Calu3 (cell line): ENCODE measurements at regions of chr22 and their contacts with region 1.

Region 1: DNA sequence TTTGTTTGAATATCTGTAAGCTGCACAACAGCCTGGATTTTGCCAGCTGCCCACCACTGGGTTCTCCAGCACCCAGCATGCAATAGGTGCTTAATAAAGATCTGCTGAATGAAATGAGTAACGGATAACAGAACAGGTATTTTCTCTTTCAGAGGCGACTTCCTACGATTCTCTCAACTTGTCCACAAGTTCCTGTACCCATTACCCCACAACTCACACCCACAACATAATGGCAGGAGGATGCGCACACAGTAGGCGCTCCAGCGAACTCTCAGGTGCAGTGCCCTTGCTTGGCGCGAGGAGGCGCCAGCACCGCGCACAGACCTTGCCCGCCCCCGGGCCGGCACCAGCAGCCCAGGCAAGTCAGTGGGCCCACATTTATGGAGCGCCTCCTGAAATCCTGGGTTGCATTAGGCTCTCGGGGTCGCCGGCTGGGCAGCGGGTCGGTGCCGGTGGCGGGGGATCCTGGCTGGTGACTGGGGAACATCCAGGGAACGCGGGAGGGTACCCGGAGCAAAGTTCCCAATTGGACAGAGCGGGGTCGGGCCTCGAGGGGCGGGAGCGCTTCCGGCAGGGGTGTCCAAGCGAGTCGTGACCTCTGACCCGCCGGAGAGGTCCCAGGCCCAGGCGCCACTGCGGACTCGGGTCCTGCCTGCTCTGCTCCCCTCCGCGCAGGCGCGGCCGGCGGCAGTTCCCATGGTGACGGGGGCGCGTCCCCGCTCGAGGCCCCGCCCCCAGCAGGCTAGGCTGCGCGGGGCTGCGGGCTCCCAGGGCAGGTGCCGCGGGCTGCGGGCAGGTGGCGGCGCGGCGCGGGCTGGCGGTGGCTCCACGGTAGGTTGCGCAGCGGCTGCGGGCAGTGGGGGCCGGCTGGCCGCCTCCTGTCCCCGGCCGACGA is at the start of gene KIAA1671:
- DNase-seq: peak; percentile 96
- H3K4me3 Mint-ChIP-seq: peak within 1 kb of the TSS; percentile 88
- H3K27ac Mint-ChIP-seq: peak within 1 kb of the TSS; percentile 92
- H3K4me1 Mint-ChIP-seq: peaks cover 37% of the 10 kb centered on the region
- H3K27me3 Mint-ChIP-seq: no peaks in the 10 kb centered on the region
- CTCF ChIP-seq: peak; percentile 98
- total RNA-seq, gene KIAA1671: 63.1 and 67.4 TPM in 2 replicates

Region 2: GRCh38 chr22:24482575-24482974 is 469.6 kb before region 1 on chr22:
- CTCF ChIA-PET with region 1: no interaction called
- intact Hi-C with region 1: no loop called
- DNase-seq: no peak
- H3K4me3 Mint-ChIP-seq: no peak overlapping the region
- H3K27ac Mint-ChIP-seq: peak overlapping the region; percentile 57
- H3K4me1 Mint-ChIP-seq: peaks cover 65% of the 10 kb centered on the region
- H3K27me3 Mint-ChIP-seq: no peaks in the 10 kb centered on the region
- CTCF ChIP-seq: no peak

Region 3: GRCh38 chr22:24996420-24996952 is 44.3 kb after region 1 on chr22:
- CTCF ChIA-PET with region 1: interaction called, 5 read pairs
- intact Hi-C with region 1: loop called (anchors 5 kb)
- DNase-seq: peak; percentile 26
- H3K4me3 Mint-ChIP-seq: no peak overlapping the region
- H3K27ac Mint-ChIP-seq: peak overlapping the region; percentile 13
- H3K4me1 Mint-ChIP-seq: peaks cover 51% of the 10 kb centered on the region
- H3K27me3 Mint-ChIP-seq: no peaks in the 10 kb centered on the region
- CTCF ChIP-seq: no peak

Region 4: DNA sequence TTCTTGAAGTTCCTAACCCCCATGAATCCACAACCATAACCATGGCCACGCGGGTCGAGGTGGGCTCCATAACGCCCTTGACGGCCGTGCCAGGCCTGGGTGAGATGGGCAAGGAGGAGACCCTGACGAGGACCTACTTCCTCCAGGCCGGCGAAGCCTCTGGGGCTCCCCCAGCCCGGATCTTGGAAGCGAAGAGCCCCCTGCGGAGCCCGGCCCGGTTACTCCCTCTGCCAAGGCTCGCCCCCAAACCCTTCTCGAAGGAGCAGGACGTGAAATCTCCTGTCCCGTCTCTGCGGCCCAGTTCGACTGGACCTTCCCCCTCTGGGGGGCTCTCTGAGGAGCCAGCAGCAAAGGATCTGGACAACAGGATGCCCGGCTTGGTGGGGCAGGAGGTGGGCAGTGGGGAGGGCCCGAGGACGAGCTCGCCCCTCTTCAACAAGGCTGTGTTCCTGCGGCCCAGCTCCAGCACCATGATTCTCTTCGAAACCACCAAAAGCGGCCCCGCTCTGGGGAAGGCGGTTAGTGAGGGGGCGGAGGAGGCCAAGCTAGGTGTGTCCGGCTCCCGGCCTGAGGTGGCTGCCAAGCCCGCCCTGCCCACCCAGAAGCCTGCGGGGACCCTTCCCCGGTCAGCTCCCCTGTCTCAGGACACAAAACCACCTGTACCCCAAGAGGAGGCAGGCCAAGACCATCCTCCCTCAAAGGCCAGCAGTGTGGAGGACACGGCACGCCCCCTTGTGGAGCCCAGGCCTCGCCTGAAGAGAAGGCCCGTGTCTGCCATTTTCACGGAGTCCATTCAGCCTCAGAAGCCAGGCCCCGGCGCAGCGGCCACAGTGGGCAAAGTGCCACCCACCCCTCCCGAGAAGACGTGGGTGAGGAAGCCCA is 76.0 kb after region 1 on chr22:
- CTCF ChIA-PET with region 1: no interaction called
- intact Hi-C with region 1: loop called (anchors 5 kb)
- DNase-seq: peak; percentile 38
- H3K4me3 Mint-ChIP-seq: no peak overlapping the region
- H3K27ac Mint-ChIP-seq: no peak overlapping the region
- H3K4me1 Mint-ChIP-seq: peaks cover 41% of the 10 kb centered on the region
- H3K27me3 Mint-ChIP-seq: no peaks in the 10 kb centered on the region
- CTCF ChIP-seq: no peak

Region 5: GRCh38 chr22:25048659-25049647 is 96.8 kb after region 1 on chr22:
- CTCF ChIA-PET with region 1: interaction called, 5 read pairs
- intact Hi-C with region 1: loop called (anchors 1 kb)
- DNase-seq: peak; percentile 83
- H3K4me3 Mint-ChIP-seq: no peak overlapping the region
- H3K27ac Mint-ChIP-seq: no peak overlapping the region
- H3K4me1 Mint-ChIP-seq: peaks cover 8% of the 10 kb centered on the region
- H3K27me3 Mint-ChIP-seq: no peaks in the 10 kb centered on the region
- CTCF ChIP-seq: peak; percentile 95